ENCODE measurements at regions of chr1 and their contacts with region 1.

Region 1: GRCh38 chr1:87335175-87335884 is 6.7 kb downstream of the LMO4 start:
- DNase-seq: peak; percentile 77
- ATAC-seq: peak; percentile 53
- H3K4me3 Mint-ChIP-seq: peak overlapping the region; percentile 76
- H3K27ac Mint-ChIP-seq: peak overlapping the region; percentile 96
- H3K4me1 Mint-ChIP-seq: peaks cover 60% of the 10 kb centered on the region
- H3K27me3 Mint-ChIP-seq: peaks cover 29% of the 10 kb centered on the region

Region 2: GRCh38 chr1:86774305-86775295 is 560.7 kb before region 1 on chr1:
- CTCF ChIA-PET with region 1: no interaction called
- POLR2A ChIA-PET with region 1: no interaction called
- intact Hi-C with region 1: loop called in 1 of 2 experiments (anchors 1 kb)
- DNase-seq: peak; percentile 84
- ATAC-seq: peak; percentile 100
- H3K4me3 Mint-ChIP-seq: peak overlapping the region; percentile 38
- H3K27ac Mint-ChIP-seq: peak overlapping the region; percentile 86
- H3K4me1 Mint-ChIP-seq: peaks cover 26% of the 10 kb centered on the region
- H3K27me3 Mint-ChIP-seq: no peaks in the 10 kb centered on the region

Region 3: GRCh38 chr1:87151500-87152421 is 183.6 kb before region 1 on chr1:
- CTCF ChIA-PET with region 1: no interaction called
- POLR2A ChIA-PET with region 1: no interaction called
- intact Hi-C with region 1: loop called in 1 of 2 experiments (anchors 5 kb)
- DNase-seq: peak; percentile 69
- ATAC-seq: peak; percentile 74
- H3K4me3 Mint-ChIP-seq: peak overlapping the region; percentile 61
- H3K27ac Mint-ChIP-seq: peak overlapping the region; percentile 48
- H3K4me1 Mint-ChIP-seq: peaks cover 15% of the 10 kb centered on the region
- H3K27me3 Mint-ChIP-seq: peaks cover 48% of the 10 kb centered on the region

Region 4: GRCh38 chr1:87449348-87449963 is 114.1 kb after region 1 on chr1:
- CTCF ChIA-PET with region 1: interaction called, 4 read pairs
- POLR2A ChIA-PET with region 1: no interaction called
- intact Hi-C with region 1: loop called (anchors 2 to 5 kb)
- DNase-seq: peak; percentile 57
- ATAC-seq: peak; percentile 75
- H3K4me3 Mint-ChIP-seq: no peak overlapping the region
- H3K27ac Mint-ChIP-seq: peak overlapping the region; percentile 15
- H3K4me1 Mint-ChIP-seq: peaks cover 16% of the 10 kb centered on the region
- H3K27me3 Mint-ChIP-seq: no peaks in the 10 kb centered on the region

Region 5: DNA sequence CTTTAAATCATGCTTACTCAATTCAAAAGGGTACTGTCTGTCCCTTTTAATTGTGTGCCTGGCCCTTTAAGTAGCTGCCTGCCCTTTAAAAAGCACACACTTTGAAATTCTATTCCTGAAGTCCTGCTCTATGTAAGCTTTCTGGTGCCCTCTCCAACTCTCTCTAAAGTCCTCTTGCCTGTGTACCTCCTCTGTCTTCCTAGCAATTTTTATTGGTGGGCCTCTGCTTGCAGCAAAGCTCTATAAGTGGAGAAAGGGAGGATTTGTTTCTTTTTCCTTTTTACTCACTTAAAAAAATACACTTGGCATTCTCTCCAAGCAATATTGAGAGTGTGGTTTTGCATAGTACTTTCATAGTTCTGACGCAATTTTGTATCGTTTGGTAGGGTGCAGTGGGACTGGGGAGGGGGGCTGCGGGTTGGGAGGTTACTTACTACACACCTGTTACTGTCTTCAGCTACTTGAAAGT is 128.7 kb after region 1 on chr1:
- CTCF ChIA-PET with region 1: no interaction called
- POLR2A ChIA-PET with region 1: no interaction called
- intact Hi-C with region 1: no loop called
- DNase-seq: no peak
- ATAC-seq: peak; percentile 36
- H3K4me3 Mint-ChIP-seq: no peak overlapping the region
- H3K27ac Mint-ChIP-seq: no peak overlapping the region
- H3K4me1 Mint-ChIP-seq: peaks cover 6% of the 10 kb centered on the region
- H3K27me3 Mint-ChIP-seq: peaks cover 5% of the 10 kb centered on the region

Measured in activated CD4-positive, alpha-beta T cell treated with anti-CD3 and anti-CD28 coated beads for 36 hours (primary cell).